ENCODE measurements at regions of chr17 and their contacts with region 1.

Region 1: DNA sequence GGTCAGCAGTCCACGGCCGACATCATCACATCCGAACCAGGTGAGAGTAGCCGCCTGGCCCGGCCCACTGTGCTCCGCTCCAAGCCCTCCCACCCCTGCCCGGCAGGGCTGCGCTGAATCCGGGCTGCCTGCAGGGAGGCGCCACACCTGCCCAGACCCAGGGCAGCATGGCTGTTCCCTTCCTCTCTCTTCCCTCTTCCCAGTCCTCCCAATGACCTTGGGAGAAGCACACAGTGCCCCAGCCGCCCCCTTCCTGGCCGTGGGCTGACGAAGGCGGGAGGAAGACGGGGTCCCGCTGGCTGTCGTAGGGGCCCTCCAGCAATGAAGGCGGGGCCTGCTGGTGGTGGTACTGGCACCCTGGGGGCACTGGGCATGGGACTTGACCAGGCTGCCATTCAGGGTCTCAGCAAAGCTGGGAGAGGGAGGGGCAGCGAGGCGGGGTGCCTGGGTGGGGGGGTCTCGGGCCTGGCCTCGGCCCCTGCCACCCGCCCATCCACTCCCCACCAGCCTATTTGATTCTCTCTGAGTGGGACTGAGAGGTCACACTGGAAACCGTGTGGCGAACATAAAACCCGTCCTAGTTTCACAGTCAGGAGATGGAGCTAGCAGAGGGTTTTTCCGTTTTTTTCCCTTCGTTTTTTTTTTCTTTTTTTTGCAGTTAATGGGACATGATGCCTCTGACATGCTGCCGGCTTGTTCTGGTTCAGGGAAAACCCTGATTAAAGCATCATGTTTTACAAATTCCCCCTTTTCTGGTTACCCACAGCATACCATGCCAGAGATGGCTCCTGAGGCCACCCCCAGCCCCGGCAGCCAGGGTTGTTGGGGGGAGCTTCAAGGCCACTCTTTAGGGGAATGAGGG is 50.6 kb downstream of the BAHCC1 start:
- DNase-seq: no peak
- H3K4me3 ChIP-seq: no peak overlapping the region
- H3K27ac ChIP-seq: no peak overlapping the region
- H3K4me1 ChIP-seq: no peaks in the 10 kb centered on the region
- H3K27me3 ChIP-seq: no peaks in the 10 kb centered on the region
- CTCF ChIP-seq: no peak

Region 2: DNA sequence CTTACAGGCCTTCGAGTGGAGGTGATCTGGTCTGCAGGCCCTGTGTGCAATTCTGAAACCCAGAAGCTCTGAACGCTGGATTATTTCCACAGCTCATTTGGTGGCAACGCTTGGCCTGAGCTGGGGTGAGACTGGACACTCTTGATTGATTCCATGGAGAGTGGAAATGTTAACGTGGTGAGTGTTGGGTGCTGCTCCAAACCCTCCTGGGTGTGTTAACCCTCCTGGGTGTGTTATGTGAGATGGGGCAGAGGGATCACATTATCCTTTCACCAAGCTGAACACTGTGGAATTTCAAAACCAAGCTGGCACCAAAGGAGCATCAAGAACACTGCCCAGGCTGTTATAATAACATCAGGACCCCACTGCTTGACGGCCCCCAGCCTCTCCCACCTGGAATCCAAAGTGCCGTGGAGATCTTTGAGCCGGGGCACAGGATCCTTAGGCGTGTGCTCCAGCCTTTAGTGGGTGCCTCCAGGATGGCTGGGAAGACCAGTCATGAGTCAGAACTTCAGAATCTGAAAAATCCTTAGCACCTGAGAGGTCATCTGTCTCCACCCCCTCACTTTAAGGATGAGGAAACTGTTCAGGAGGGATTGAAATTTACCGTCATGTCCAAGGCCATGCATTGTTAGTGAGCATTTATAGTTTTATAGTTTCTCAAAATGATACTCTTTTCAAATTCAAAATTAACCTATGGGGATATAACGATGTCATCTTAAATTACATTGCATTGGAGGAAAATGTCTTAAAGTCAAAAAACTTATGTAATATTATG is 826.1 kb before region 1 on chr17:
- CTCF ChIA-PET with region 1: no interaction called
- dilution Hi-C with region 1: no loop called
- in situ Hi-C with region 1: no loop called
- intact Hi-C with region 1: no loop called
- DNase-seq: peak; percentile 74
- H3K4me3 ChIP-seq: no peak overlapping the region
- H3K27ac ChIP-seq: peak overlapping the region; percentile 42
- H3K4me1 ChIP-seq: peaks cover 30% of the 10 kb centered on the region
- H3K27me3 ChIP-seq: no peaks in the 10 kb centered on the region
- CTCF ChIP-seq: no peak

Region 3: GRCh38 chr17:81484195-81484979 is 38.5 kb after region 1 on chr17:
- CTCF ChIA-PET with region 1: no interaction called
- dilution Hi-C with region 1: no loop called
- in situ Hi-C with region 1: no loop called
- intact Hi-C with region 1: no loop called
- DNase-seq: peak; percentile 69
- H3K4me3 ChIP-seq: peak overlapping the region in 2 of 3 experiments; percentile 42 to 55
- H3K27ac ChIP-seq: no peak overlapping the region
- H3K4me1 ChIP-seq: peaks cover 27% of the 10 kb centered on the region
- H3K27me3 ChIP-seq: peaks cover 7% of the 10 kb centered on the region
- CTCF ChIP-seq: peak; percentile 59 to 81

Region 4: GRCh38 chr17:81494626-81495385 is 48.9 kb after region 1 on chr17:
- CTCF ChIA-PET with region 1: no interaction called
- dilution Hi-C with region 1: loop called (anchors 5 kb)
- in situ Hi-C with region 1: no loop called
- intact Hi-C with region 1: no loop called
- DNase-seq: no peak
- H3K4me3 ChIP-seq: no peak overlapping the region
- H3K27ac ChIP-seq: no peak overlapping the region
- H3K4me1 ChIP-seq: no peaks in the 10 kb centered on the region
- H3K27me3 ChIP-seq: peaks cover 2% of the 10 kb centered on the region
- CTCF ChIP-seq: no peak